GM10248 (cell line): ENCODE measurements at regions of chr5 and their contacts with region 1.

Region 1: GRCh38 chr5:17269201-17269600 is 51.8 kb downstream of the BASP1 start:
- DNase-seq: no peak
- CTCF ChIP-seq: no peak

Region 2: GRCh38 chr5:17257705-17258273 is 11.4 kb before region 1 on chr5:
- CTCF ChIA-PET with region 1: interaction called, 17 read pairs
- POLR2A ChIA-PET with region 1: no interaction called
- DNase-seq: peak; percentile 53
- CTCF ChIP-seq: no peak

Region 3: GRCh38 chr5:17290055-17290974 is 21.1 kb after region 1 on chr5:
- CTCF ChIA-PET with region 1: no interaction called
- POLR2A ChIA-PET with region 1: no interaction called
- DNase-seq: no peak
- CTCF ChIP-seq: no peak

Region 4: DNA sequence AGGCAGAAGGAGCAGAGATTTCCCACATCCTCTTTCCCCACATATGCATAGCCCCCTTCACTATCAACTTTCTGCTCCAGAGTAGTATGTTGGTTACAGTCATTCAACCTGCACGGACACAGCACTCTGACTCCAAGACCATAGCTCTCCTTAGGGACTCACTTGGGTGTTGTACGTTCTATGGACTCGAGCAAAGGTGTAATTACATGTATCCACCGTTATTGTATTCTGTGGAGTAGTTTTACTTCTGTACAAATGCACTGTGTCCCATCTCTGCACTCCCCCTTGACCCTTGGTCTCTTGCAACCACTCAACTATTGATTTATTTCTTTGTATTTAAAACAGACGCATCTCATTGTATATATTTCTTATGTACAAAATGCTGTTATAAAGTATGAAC is 234.4 kb after region 1 on chr5:
- CTCF ChIA-PET with region 1: no interaction called
- POLR2A ChIA-PET with region 1: no interaction called
- DNase-seq: no peak
- CTCF ChIP-seq: no peak